ENCODE measurements at regions of chr9 and their contacts with region 1.

Region 1: DNA sequence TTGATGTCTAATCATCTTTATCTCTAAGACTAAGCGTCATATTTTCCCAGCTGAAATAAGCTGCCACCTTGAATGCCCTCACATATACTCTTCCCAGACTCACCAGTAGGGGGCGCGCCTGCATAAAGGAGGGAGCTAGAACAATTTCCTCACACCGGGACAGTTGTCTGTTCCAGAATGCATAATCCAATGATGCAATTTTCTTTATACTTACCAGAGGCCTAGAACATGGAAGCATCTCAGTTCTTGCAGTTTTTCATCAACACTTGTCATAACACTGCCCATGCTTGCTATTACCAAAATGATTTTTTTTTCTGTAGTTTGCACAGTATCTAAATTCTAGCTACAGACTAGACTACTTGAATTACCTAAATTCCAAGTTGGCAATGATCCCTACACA is 203.9 kb downstream of the FRMD3 start:
- DNase-seq: peak; percentile 92
- H3K4me3 Mint-ChIP-seq: no peak overlapping the region
- H3K27ac Mint-ChIP-seq: no peak overlapping the region
- H3K4me1 Mint-ChIP-seq: no peaks in the 10 kb centered on the region
- H3K27me3 Mint-ChIP-seq: no peaks in the 10 kb centered on the region
- CTCF ChIP-seq: peak; percentile 83

Region 2: DNA sequence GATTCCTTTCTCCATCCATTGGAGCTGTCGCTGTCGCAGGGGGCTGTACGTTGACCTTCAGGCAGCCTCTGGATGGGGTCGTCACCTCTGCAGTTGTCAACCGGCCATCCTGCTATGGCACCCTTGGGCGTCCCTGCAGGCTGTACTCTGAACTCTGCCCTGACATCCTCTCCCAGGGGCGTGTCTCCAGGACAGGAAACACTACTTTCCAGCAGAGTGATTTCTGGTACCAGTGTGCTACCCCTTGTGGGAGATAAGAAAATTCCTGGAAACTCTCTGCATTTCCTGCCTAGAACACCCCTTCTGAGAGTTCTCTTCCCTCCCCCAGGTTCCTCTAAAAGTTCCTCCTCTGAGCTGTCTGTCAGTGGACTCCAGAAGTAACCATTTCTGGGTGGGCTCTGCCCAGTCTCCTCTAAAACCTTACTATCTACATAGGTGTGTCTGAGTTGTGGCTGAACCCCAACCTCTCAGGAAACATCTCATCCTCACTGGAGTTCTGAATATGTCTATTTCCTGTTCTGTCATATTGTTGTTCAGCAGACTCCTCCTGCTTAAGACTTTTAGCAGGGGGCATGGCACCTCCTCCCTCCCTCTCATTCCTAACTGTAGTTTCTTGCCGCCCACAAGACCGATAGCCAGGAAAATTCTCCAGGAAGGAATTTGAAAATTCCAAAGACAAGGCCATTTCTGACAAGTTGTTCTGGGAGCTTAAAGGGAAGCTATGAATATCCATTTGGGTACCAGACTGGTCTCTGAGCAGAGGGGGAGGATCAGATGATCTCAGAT is 126.1 kb before region 1 on chr9:
- CTCF ChIA-PET with region 1: no interaction called
- POLR2A ChIA-PET with region 1: no interaction called
- intact Hi-C with region 1: no loop called
- DNase-seq: no peak
- H3K4me3 Mint-ChIP-seq: no peak overlapping the region
- H3K27ac Mint-ChIP-seq: no peak overlapping the region
- H3K4me1 Mint-ChIP-seq: no peaks in the 10 kb centered on the region
- H3K27me3 Mint-ChIP-seq: no peaks in the 10 kb centered on the region
- CTCF ChIP-seq: no peak

Region 3: DNA sequence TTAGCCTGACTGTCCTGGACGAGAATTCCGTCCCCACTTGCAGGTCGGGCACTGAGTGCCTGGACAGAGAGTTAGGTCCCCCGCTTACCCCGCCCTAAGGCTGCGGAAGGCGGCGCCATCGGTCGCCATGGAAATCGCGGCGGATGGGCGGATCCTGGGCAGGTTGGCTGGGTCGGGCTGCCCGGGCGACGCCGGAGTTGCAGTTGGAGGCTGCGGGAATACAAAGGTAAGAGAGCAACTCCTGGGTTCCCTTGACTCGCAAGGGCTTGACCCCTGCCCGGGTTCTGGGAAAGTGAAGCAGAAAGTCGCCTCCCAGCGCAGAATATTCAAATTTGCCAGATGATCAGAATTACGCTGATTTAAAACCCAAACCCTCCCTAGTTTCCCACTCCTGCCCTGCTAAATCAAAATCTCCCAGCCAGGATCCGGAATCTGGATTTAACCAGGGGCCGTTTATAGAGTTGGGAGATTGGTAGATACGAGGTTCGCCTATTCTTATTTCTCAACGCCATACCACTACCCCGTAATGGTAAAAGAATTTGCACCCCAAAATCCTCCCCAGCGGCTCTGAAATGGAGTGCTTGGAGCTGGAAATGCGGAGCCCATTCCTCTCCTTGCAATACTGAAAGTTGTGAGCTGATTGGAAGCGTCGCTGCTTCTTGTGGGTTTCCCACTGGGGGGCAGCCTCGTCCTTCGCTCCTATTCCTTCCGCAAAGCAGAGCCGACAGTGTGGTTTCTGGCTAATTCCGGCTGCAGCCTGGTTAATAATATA is 115.0 kb before region 1 on chr9:
- CTCF ChIA-PET with region 1: interaction called, 12 read pairs
- POLR2A ChIA-PET with region 1: interaction called, 3 read pairs
- intact Hi-C with region 1: no loop called
- DNase-seq: peak; percentile 82
- H3K4me3 Mint-ChIP-seq: peak overlapping the region; percentile 85
- H3K27ac Mint-ChIP-seq: peak overlapping the region; percentile 56
- H3K4me1 Mint-ChIP-seq: no peaks in the 10 kb centered on the region
- H3K27me3 Mint-ChIP-seq: no peaks in the 10 kb centered on the region
- CTCF ChIP-seq: peak; percentile 27

Region 4: DNA sequence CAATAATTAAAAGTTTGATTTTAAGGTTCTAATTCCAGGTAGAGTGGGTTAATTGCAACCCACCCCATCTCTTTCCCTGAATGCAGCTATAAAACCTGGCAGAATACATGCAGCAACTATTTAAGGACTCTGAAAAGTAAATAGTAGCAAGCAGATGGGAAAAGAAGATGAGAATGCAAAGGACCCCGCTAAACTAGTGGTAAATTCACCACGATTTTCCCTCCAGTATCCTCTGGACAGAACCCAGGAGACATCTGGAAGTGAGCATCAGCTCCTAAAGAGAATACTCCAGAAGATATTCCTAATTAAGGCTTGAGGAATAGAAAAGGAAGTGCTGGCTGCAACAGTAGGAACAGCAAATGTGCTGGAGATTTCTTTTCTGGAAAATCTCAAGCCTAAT is 33.0 kb after region 1 on chr9:
- CTCF ChIA-PET with region 1: no interaction called
- POLR2A ChIA-PET with region 1: no interaction called
- intact Hi-C with region 1: no loop called
- DNase-seq: no peak
- H3K4me3 Mint-ChIP-seq: no peak overlapping the region
- H3K27ac Mint-ChIP-seq: no peak overlapping the region
- H3K4me1 Mint-ChIP-seq: no peaks in the 10 kb centered on the region
- H3K27me3 Mint-ChIP-seq: no peaks in the 10 kb centered on the region
- CTCF ChIP-seq: no peak

Region 5: DNA sequence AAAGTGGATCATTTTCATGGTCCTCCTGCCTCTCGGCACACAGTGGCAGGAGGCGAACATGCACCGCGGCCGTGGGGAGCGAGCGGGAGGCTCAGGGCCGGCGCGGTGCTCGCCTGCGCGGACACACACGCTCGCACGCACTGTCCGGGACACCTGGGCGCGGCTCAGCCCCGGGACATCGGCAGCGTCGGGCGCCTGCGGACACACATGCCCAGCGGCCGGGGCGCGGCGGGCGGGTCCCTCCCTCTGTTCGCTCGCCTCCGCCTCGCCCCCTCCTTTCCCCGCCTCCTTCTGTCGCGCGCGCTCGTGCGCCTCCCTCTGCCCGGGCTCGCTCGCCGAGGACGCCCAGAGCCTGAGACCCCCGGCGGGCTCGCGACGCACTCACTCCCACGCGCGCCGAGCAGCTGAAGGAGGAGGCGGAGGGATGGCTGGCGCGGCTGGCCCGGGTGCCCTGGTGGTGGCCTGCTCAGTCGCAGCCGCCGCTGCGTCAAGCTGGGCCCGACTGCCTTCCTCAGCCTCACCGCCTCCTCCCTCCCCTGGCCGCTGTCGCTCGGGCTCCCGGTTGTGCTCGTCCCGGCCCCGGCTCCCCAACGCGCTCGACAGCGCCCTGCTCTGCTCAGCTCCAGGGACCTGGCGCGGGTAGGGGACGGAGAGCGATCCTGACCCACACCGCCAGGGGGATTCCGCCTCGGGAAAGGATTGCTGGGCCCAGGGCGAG is 204.0 kb after region 1 on chr9 and contains the start of gene FRMD3:
- CTCF ChIA-PET with region 1: interaction called, 57 read pairs
- POLR2A ChIA-PET with region 1: no interaction called
- intact Hi-C with region 1: loop called (anchors 1 kb)
- DNase-seq: peak; percentile 53
- H3K4me3 Mint-ChIP-seq: peak within 1 kb of the TSS; percentile 68
- H3K27ac Mint-ChIP-seq: no peak within 1 kb of the TSS
- H3K4me1 Mint-ChIP-seq: no peaks in the 10 kb centered on the region
- H3K27me3 Mint-ChIP-seq: peaks cover 11% of the 10 kb centered on the region
- CTCF ChIP-seq: peak; percentile 23
- total RNA-seq, gene FRMD3: 0.17 and 0.28 TPM in 2 replicates

Region 6: GRCh38 chr9:83544002-83544698 is 209.8 kb after region 1 on chr9:
- CTCF ChIA-PET with region 1: interaction called, 57 read pairs
- POLR2A ChIA-PET with region 1: interaction called, 3 read pairs
- intact Hi-C with region 1: no loop called
- DNase-seq: peak; percentile 65
- H3K4me3 Mint-ChIP-seq: no peak overlapping the region
- H3K27ac Mint-ChIP-seq: no peak overlapping the region
- H3K4me1 Mint-ChIP-seq: peaks cover 5% of the 10 kb centered on the region
- H3K27me3 Mint-ChIP-seq: no peaks in the 10 kb centered on the region
- CTCF ChIP-seq: peak; percentile 40

Region 7: DNA sequence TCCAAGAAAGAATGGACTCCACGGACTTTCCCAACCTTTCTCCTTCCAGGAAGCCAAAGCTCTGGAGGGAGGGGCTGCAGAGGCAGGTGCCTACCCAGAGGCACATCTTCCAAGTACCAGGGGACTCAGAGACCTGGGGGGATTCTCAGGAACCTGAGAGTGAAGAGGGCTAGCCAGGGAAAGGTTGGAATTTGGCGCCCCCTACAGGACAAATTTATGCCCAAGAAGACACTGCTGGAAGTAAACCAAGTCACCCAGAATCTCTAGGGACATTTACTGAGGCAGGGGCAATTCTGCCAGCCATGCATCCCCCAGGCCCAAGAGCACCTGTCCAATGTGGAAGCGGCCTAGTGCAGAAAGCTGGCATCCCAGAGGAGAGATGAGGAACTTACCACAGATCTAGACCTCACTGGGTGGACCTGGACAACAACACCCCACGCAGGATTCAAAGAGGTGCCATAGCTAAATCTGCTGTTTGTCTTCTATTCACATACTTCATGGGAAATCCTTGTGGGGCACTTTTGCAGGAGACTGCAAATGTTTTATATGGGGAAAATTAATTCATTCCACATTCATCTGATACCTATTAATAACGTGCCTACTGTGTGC is 262.7 kb after region 1 on chr9:
- CTCF ChIA-PET with region 1: interaction called, 17 read pairs
- POLR2A ChIA-PET with region 1: no interaction called
- intact Hi-C with region 1: loop called (anchors 2 kb)
- DNase-seq: peak; percentile 53
- H3K4me3 Mint-ChIP-seq: no peak overlapping the region
- H3K27ac Mint-ChIP-seq: no peak overlapping the region
- H3K4me1 Mint-ChIP-seq: peaks cover 5% of the 10 kb centered on the region
- H3K27me3 Mint-ChIP-seq: no peaks in the 10 kb centered on the region
- CTCF ChIP-seq: peak; percentile 69

Region 8: DNA sequence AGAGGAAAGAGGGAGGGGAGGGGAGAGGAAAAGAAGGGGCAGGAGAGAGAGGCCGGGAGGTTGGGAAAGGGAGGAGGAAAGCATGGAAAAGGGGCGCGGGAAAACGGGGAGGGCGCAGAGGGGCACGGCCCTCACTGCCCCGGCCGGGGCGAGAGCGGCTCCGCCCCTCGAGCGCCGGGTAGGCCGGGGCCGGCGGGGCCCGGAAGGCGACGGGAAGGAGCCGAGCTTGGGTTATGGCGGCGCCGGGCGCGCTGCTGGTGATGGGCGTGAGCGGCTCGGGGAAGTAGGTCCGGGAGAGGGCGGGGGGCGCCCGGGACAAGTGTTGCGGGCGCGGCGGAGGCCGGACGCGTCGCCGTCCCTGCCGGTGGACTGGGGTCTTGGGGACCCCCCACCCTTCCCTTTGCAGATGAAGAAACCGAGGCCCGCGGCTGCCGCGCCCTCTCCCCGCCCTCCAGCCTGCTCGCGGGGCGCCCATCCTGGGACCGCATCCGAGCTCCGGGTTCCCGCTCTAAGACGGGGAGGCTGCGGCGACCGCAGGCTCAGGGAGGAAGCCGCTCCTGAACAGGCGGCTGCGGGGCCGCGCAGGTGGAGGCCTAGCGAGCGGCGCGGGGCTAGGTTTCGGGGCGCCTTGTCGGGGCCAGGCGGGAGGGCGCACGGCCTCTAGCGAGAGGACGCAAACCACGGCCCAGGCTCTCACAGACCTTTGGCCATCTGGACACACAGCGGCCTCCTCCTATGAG is 288.8 kb after region 1 on chr9 and contains the start of gene IDNK:
- CTCF ChIA-PET with region 1: interaction called, 14 read pairs
- POLR2A ChIA-PET with region 1: interaction called, 7 read pairs
- intact Hi-C with region 1: no loop called
- DNase-seq: peak; percentile 65
- H3K4me3 Mint-ChIP-seq: peak within 1 kb of the TSS; percentile 83
- H3K27ac Mint-ChIP-seq: peak within 1 kb of the TSS; percentile 89
- H3K4me1 Mint-ChIP-seq: peaks cover 8% of the 10 kb centered on the region
- H3K27me3 Mint-ChIP-seq: no peaks in the 10 kb centered on the region
- CTCF ChIP-seq: no peak
- total RNA-seq, gene IDNK: 10.9 and 19.7 TPM in 2 replicates

Region 9: GRCh38 chr9:83649080-83649479 is 314.8 kb after region 1 on chr9:
- CTCF ChIA-PET with region 1: interaction called, 16 read pairs
- POLR2A ChIA-PET with region 1: no interaction called
- intact Hi-C with region 1: loop called (anchors 1 kb)
- DNase-seq: peak; percentile 58
- H3K4me3 Mint-ChIP-seq: no peak overlapping the region
- H3K27ac Mint-ChIP-seq: no peak overlapping the region
- H3K4me1 Mint-ChIP-seq: no peaks in the 10 kb centered on the region
- H3K27me3 Mint-ChIP-seq: no peaks in the 10 kb centered on the region
- CTCF ChIP-seq: peak; percentile 62